MCF 10A (cell line): ENCODE measurements at regions of chr5 and their contacts with region 1.

Region 1: GRCh38 chr5:96509721-96510333 is 76.8 kb upstream of the PCSK1 start:
- DNase-seq: peak; percentile 93
- H3K4me3 Mint-ChIP-seq: no peak overlapping the region
- H3K27ac Mint-ChIP-seq: peak overlapping the region; percentile 83
- H3K4me1 Mint-ChIP-seq: peaks cover 21% of the 10 kb centered on the region
- H3K27me3 Mint-ChIP-seq: no peaks in the 10 kb centered on the region
- CTCF ChIP-seq: no peak

Region 2: GRCh38 chr5:95858661-95859326 is 651.0 kb before region 1 on chr5:
- CTCF ChIA-PET with region 1: no interaction called
- POLR2A ChIA-PET with region 1: interaction called, 5 read pairs
- intact Hi-C with region 1: loop called (anchors 5 kb)
- DNase-seq: peak; percentile 96
- H3K4me3 Mint-ChIP-seq: peak overlapping the region; percentile 67
- H3K27ac Mint-ChIP-seq: peak overlapping the region; percentile 99
- H3K4me1 Mint-ChIP-seq: peaks cover 57% of the 10 kb centered on the region
- H3K27me3 Mint-ChIP-seq: no peaks in the 10 kb centered on the region
- CTCF ChIP-seq: peak; percentile 93

Region 3: GRCh38 chr5:96408276-96408777 is 101.5 kb before region 1 on chr5:
- CTCF ChIA-PET with region 1: no interaction called
- POLR2A ChIA-PET with region 1: interaction called, 26 read pairs
- intact Hi-C with region 1: loop called (anchors 1 kb)
- DNase-seq: peak; percentile 98
- H3K4me3 Mint-ChIP-seq: peak overlapping the region; percentile 61
- H3K27ac Mint-ChIP-seq: peak overlapping the region; percentile 98
- H3K4me1 Mint-ChIP-seq: peaks cover 22% of the 10 kb centered on the region
- H3K27me3 Mint-ChIP-seq: no peaks in the 10 kb centered on the region
- CTCF ChIP-seq: no peak

Region 4: GRCh38 chr5:96492654-96493053 is 17.2 kb before region 1 on chr5:
- CTCF ChIA-PET with region 1: interaction called, 8 read pairs
- POLR2A ChIA-PET with region 1: interaction called, 38 read pairs
- intact Hi-C with region 1: no loop called
- DNase-seq: peak; percentile 95
- H3K4me3 Mint-ChIP-seq: peak overlapping the region; percentile 40
- H3K27ac Mint-ChIP-seq: peak overlapping the region; percentile 96
- H3K4me1 Mint-ChIP-seq: peaks cover 10% of the 10 kb centered on the region
- H3K27me3 Mint-ChIP-seq: no peaks in the 10 kb centered on the region
- CTCF ChIP-seq: no peak

Region 5: DNA sequence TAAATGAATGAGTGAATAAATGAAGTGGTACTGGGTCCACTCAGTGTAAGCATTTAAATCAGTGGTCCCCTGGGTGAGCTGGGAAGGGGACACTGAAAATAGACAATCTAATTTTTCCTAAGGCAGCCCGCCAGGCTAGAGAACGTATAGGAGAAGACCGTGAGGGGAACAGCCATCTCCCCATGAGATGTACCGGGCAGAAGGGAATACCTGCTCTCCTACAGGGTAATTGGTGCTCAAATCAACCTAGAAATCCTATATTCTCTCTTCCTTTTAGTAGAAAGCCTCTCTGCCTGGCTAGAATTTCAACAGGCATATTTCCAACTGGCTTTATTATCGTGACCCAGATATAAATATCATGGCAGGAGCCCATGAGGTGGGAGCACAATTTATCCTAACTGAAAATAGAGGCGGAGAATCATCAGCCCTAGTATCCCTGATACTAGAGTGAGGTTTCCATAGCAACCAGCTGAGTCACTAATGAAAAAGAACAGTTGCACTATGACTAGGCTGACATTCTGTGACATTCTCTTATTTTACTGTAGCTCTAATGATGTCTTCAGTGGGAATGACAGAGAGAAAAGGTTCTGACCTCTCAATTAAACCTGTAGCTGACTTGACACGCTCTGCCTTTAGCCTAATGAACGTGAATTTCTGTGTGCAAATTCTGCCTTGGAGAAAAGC is 55.9 kb after region 1 on chr5:
- CTCF ChIA-PET with region 1: no interaction called
- POLR2A ChIA-PET with region 1: interaction called, 16 read pairs
- intact Hi-C with region 1: no loop called
- DNase-seq: peak; percentile 65
- H3K4me3 Mint-ChIP-seq: no peak overlapping the region
- H3K27ac Mint-ChIP-seq: peak overlapping the region; percentile 27
- H3K4me1 Mint-ChIP-seq: peaks cover 25% of the 10 kb centered on the region
- H3K27me3 Mint-ChIP-seq: no peaks in the 10 kb centered on the region
- CTCF ChIP-seq: no peak

Region 6: DNA sequence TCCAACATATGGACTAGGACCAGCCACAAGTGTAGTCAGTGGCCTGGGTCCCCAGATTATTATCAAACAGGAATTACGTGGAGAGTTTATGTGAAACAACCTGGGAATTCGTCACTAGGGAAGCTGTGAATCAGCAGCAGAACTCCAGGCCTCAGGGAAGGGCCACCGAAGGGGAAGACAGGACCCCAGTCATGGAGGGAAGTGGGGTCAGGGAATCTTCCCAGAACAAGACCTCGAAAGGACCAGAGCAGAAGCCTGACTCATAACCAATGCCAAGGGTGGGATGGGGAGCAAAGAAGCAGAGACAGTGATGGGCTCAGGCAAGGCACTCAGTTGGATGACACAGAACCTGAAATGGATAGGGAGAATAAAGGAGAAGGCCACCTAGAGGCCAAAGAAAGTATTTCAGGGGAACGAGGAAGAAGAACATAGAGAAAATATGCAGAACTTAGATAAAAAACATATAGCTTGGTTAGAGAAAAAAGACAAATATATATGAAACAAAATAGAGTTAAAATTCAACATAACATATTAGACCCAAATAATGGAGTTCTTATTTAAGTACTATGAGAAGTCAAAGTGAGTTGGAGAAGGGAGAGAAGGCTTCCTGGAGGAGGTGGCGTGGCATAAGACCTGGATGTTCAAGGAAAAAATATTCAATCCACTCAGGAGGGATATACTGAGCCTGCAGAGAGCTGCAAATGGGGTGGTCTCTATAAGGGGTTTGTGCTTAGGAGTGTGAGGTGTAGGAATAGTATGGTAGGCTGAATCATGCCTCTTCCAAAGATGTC is 85.7 kb after region 1 on chr5:
- CTCF ChIA-PET with region 1: no interaction called
- POLR2A ChIA-PET with region 1: interaction called, 4 read pairs
- intact Hi-C with region 1: loop called (anchors 10 kb)
- DNase-seq: peak; percentile 46
- H3K4me3 Mint-ChIP-seq: no peak overlapping the region
- H3K27ac Mint-ChIP-seq: no peak overlapping the region
- H3K4me1 Mint-ChIP-seq: peaks cover 9% of the 10 kb centered on the region
- H3K27me3 Mint-ChIP-seq: no peaks in the 10 kb centered on the region
- CTCF ChIP-seq: peak; percentile 33